ENCODE measurements at regions of chr17 and their contacts with region 1.

Region 1: GRCh38 chr17:37761059-37761458 is 16.2 kb upstream of the HNF1B start:
- DNase-seq: no peak
- H3K4me3 ChIP-seq: no peak overlapping the region
- H3K27ac ChIP-seq: no peak overlapping the region
- H3K4me1 ChIP-seq: no peaks in the 10 kb centered on the region
- H3K27me3 ChIP-seq: no peaks in the 10 kb centered on the region
- CTCF ChIP-seq: no peak

Region 2: DNA sequence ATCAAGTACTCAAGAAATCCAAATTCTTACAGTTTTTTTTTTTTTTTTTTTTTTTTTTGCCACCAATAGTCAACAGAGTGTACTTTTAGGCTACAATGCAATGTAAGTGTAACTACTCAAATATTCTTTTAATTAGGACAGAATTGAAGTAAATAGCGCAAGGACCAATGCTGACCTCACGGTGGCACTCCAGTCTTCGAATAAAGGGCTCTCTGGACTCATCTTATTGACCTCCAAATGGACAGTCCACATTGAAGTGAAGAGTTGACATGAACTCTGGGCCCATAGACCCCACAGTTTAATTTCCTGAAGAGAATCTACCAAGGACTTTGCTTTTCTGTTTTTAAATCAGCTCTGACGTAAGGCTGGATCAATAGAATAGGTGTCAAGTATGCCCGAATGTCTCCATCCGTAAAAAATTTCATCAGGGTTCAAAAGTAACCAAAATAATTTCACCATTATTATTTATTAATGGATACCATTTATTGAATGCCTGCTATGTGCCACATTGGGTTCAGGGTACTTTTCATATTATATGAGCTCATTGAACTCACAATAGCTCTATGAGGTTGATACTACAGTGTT is 110.5 kb before region 1 on chr17:
- intact Hi-C with region 1: loop called (anchors 10 kb)
- DNase-seq: peak; percentile 44
- H3K4me3 ChIP-seq: no peak overlapping the region
- H3K27ac ChIP-seq: no peak overlapping the region
- H3K4me1 ChIP-seq: no peaks in the 10 kb centered on the region
- H3K27me3 ChIP-seq: no peaks in the 10 kb centered on the region
- CTCF ChIP-seq: peak; percentile 13